ENCODE measurements at regions of chr22 and their contacts with region 1.

Region 1: DNA sequence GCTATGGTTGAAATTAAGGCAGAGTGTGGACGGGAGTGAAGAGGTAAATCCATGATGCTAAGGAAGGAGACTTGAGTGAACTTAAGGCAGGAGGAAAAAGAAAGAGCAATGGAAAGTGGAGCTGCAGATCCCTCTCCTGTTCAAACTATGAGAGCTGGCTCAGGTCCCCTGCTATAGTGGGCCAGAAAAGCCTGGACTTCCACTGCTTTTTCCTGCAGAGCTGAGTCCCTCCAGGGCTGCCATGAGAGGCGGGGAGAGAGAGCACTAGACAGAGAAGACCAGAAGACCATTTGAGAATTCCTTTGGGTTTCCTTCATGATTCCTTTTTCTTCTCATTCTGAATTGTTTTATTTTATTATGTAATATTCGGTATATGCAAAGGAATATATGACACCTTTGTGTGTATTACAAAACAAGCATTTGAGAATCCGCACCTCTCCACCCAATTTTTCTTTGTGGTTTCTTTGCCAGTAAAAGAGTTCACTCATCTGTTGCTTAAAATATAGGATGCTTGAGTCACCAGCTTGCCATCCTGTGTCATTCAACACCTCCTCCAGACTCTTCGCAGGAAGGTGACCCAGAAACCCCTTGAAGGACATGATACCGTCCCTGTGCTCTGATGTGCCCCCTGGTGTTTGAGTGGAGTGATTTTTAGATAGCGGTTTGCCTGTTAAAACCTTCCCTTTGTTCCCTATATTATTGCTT is 24.4 kb downstream of the SREBF2 start:
- DNase-seq: peak; percentile 46
- ATAC-seq: peak; percentile 60
- H3K4me3 ChIP-seq: no peak overlapping the region
- H3K27ac ChIP-seq: no peak overlapping the region
- H3K4me1 ChIP-seq: peaks cover 47% of the 10 kb centered on the region
- H3K27me3 ChIP-seq: no peaks in the 10 kb centered on the region
- CTCF ChIP-seq: peak; percentile 54 to 76 (median 71)
- EP300 ChIP-seq: no peak
- POLR2A ChIP-seq: no peak
- RAD21 ChIP-seq: peak; percentile 64

Region 2: DNA sequence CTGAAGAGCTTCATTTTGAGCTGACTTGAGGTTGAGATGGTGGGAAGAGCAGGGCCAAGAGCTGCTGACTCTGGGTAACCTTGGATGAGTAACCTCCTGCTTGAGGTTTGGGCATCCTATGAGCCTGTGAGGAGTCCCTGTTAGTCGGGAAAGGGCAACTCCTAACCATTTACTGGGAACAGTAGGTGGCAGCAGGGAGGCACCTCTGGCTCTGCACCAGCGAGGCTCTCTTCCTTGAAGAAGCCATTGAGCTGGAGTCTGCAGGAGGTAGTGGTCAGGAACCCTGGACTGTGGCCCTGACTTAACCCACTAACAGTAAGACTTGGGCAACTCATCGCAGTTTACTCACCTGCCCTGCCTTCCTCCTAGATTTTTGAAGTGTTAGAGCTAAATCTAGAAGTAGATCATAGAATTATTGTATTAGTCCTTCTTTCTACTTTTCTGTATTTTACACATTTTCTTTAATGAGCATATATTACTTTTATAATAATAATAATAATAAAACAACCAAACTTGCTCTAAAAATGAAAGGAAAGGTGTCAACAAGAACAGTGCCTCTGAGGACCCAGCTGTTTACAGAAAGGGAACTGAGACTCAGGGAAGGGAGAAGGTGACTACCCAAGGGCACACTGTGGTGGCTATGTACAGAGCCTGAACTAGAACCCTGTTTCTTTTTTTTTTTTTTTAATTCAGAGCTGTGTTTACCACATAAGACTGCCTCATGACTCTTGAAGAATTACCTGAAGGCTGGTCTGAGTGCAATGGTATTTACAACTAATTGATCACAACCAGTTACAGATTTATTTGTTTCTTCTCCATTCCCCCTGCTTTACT is 110.5 kb before region 1 on chr22:
- CTCF ChIA-PET with region 1: interaction called, 20 read pairs
- POLR2A ChIA-PET with region 1: interaction called, 6 read pairs
- RAD21 ChIA-PET with region 1: interaction called, 23 read pairs
- SMC1A ChIA-PET with region 1: interaction called, 18 read pairs
- in situ Hi-C with region 1: no loop called
- intact Hi-C with region 1: loop called (anchors 1 kb)
- DNase-seq: peak; percentile 80
- ATAC-seq: peak; percentile 94
- H3K4me3 ChIP-seq: peak overlapping the region; percentile 34; the same call in 1 of the 2 replicates
- H3K27ac ChIP-seq: peak overlapping the region; percentile 69
- H3K4me1 ChIP-seq: peaks cover 42% of the 10 kb centered on the region
- H3K27me3 ChIP-seq: no peaks in the 10 kb centered on the region
- CTCF ChIP-seq: peak; percentile 75 to 81 (median 77)
- EP300 ChIP-seq: peak; percentile 65 to 85
- POLR2A ChIP-seq: no peak
- RAD21 ChIP-seq: peak; percentile 71

Region 3: DNA sequence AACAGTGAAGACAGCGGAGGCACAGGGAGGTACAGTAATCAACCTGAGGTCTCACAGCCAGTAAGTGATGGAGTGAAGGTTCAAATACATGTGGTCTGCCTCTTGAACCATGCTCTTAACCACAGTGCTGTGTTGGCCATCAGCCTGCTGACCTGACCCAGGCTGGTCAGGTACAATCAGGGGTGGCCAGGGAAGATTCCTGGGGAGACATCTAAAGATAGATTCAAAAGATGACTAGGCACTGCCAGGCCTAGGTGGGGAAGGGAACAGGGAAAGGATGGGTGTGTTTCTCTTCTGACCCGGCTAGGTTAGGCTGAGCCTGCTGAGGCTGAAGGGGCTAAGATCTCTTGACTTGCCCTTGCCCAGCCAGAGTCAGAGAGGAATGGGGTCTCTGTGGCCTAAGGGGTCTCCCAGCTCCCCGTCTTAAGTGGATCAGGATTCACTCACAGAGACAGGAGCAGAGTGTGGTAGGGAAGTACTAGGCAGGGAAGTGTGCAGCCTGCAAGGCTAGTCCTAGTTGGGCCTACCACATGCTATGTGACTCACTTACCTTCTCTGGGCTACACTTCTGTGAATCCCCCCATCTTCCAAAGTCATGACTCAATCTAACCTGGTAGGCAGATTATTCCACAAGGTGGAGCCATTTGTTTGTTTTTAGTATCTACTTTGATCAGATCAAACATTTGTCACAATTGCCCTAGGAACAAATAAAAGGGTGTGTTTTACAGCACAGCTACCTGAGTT is 34.8 kb before region 1 on chr22:
- CTCF ChIA-PET with region 1: interaction called, 8 read pairs
- POLR2A ChIA-PET with region 1: no interaction called
- RAD21 ChIA-PET with region 1: interaction called, 5 read pairs
- SMC1A ChIA-PET with region 1: interaction called, 5 read pairs
- in situ Hi-C with region 1: no loop called
- intact Hi-C with region 1: loop called (anchors 5 kb)
- DNase-seq: peak; percentile 47
- ATAC-seq: peak; percentile 92
- H3K4me3 ChIP-seq: no peak overlapping the region
- H3K27ac ChIP-seq: no peak overlapping the region
- H3K4me1 ChIP-seq: no peaks in the 10 kb centered on the region; the same call in 1 of the 2 replicates
- H3K27me3 ChIP-seq: no peaks in the 10 kb centered on the region
- CTCF ChIP-seq: peak; percentile 55 to 67 (median 59); a peak in 5 of 6 replicates
- EP300 ChIP-seq: no peak
- POLR2A ChIP-seq: no peak
- RAD21 ChIP-seq: peak; percentile 82

Region 4: GRCh38 chr22:41873391-41873790 is 16.1 kb after region 1 on chr22:
- CTCF ChIA-PET with region 1: interaction called, 16 read pairs
- POLR2A ChIA-PET with region 1: interaction called, 24 read pairs
- RAD21 ChIA-PET with region 1: interaction called, 39 read pairs
- SMC1A ChIA-PET with region 1: interaction called, 49 read pairs
- in situ Hi-C with region 1: no loop called
- intact Hi-C with region 1: no loop called
- DNase-seq: no peak
- ATAC-seq: peak; percentile 34
- H3K4me3 ChIP-seq: no peak overlapping the region
- H3K27ac ChIP-seq: no peak overlapping the region
- H3K4me1 ChIP-seq: no peaks in the 10 kb centered on the region
- H3K27me3 ChIP-seq: no peaks in the 10 kb centered on the region
- CTCF ChIP-seq: no peak
- EP300 ChIP-seq: no peak
- POLR2A ChIP-seq: no peak
- RAD21 ChIP-seq: no peak

Region 5: GRCh38 chr22:41935015-41935351 is 77.7 kb after region 1 on chr22:
- CTCF ChIA-PET with region 1: interaction called, 41 read pairs
- POLR2A ChIA-PET with region 1: interaction called, 61 read pairs
- RAD21 ChIA-PET with region 1: interaction called, 101 read pairs
- SMC1A ChIA-PET with region 1: interaction called, 41 read pairs
- in situ Hi-C with region 1: no loop called
- intact Hi-C with region 1: loop called (anchors 2 kb)
- DNase-seq: no peak
- ATAC-seq: no peak
- H3K4me3 ChIP-seq: no peak overlapping the region
- H3K27ac ChIP-seq: peak overlapping the region; percentile 94; the same call in 1 of the 2 replicates
- H3K4me1 ChIP-seq: peaks cover 80% of the 10 kb centered on the region
- H3K27me3 ChIP-seq: no peaks in the 10 kb centered on the region
- CTCF ChIP-seq: no peak
- EP300 ChIP-seq: no peak
- POLR2A ChIP-seq: no peak
- RAD21 ChIP-seq: no peak

Region 6: GRCh38 chr22:41951898-41952474 is 94.7 kb after region 1 on chr22 and contains the start of gene SMIM45:
- CTCF ChIA-PET with region 1: interaction called, 9 read pairs
- POLR2A ChIA-PET with region 1: interaction called, 10 read pairs
- RAD21 ChIA-PET with region 1: interaction called, 13 read pairs
- SMC1A ChIA-PET with region 1: interaction called, 5 read pairs
- in situ Hi-C with region 1: no loop called
- intact Hi-C with region 1: no loop called
- DNase-seq: no peak
- ATAC-seq: peak; percentile 35
- H3K4me3 ChIP-seq: no peak within 1 kb of the TSS
- H3K27ac ChIP-seq: no peak within 1 kb of the TSS
- H3K4me1 ChIP-seq: peaks cover 41% of the 10 kb centered on the region
- H3K27me3 ChIP-seq: no peaks in the 10 kb centered on the region
- CTCF ChIP-seq: peak in 1 of 3 experiments; percentile 19; a peak in 2 of 6 replicates
- EP300 ChIP-seq: no peak
- POLR2A ChIP-seq: no peak
- RAD21 ChIP-seq: no peak